ENCODE measurements at regions of chr6 and their contacts with region 1.

Region 1: DNA sequence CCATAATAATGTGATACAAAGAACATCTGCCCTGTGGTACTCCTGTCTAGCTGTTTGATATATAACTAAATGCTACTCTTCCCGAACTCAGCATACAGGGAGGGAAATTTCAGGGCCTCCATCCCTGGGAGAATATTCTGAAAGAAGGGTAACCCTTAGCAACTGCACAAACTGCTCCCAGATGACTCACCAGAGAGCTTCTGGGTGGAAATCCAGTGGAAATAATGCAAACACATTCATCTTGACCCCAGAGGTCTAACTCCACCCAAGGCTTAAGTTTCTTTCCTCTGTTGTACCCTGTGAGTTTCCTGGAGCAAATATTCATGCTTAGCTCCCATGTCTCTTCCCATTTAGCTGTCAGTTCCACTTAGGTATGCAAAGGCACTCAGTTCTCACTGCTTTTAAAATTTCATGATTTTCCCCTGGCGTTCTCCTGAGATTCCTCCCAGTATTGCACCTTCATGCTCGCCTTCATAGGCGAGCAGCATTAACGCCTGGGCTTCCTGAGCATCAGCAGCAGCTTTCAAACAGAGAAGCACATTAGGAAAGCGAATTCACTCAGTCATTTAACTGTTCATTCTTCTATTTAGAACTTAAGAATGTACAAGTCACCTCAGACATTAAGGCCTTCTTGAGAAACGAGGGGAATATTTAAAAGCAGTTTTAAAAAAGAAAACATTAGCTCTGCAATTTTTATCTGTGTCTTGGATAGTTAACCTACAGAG is 43.8 kb upstream of the LAMA4 start:
- DNase-seq: peak; percentile 48 to 98
- H3K4me3 ChIP-seq: peak overlapping the region; percentile 58
- H3K27ac ChIP-seq: peak overlapping the region; percentile 99
- H3K4me1 ChIP-seq: peaks cover 68% of the 10 kb centered on the region
- H3K27me3 ChIP-seq: no peaks in the 10 kb centered on the region
- CTCF ChIP-seq: peak; percentile 49

Region 2: DNA sequence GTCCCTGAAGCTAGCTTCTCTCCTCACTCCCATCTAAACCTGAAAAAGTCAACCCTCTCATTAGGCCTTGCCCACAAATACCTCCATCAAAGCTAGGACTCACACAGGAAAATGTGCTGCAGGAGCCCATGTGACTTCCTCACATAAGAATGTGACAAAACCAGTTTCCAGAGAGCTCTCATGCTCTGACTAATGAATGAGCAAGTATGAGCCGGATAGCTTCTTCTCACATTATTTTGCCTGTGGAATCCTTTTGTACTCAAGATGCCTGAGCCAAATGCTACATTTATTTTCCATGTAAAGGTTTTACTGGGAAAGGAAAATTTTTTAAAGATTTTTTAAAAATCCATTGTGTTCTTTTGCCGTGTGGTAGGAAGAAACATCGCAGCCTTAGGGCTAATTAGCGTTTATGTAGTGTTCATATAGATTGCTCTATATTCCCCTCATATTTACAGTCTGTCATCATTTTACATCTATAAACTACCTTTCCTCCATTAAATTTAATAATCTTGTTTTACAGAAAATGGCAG is 312.9 kb before region 1 on chr6:
- CTCF ChIA-PET with region 1: no interaction called
- POLR2A ChIA-PET with region 1: interaction called, 11 read pairs
- intact Hi-C with region 1: no loop called
- DNase-seq: peak; percentile 65 to 100
- H3K4me3 ChIP-seq: peak overlapping the region; percentile 24; the same call in 1 of the 2 replicates
- H3K27ac ChIP-seq: peak overlapping the region; percentile 85
- H3K4me1 ChIP-seq: peaks cover 52% of the 10 kb centered on the region
- H3K27me3 ChIP-seq: no peaks in the 10 kb centered on the region
- CTCF ChIP-seq: no peak

Region 3: GRCh38 chr6:112203577-112204349 is 94.4 kb before region 1 on chr6:
- CTCF ChIA-PET with region 1: no interaction called
- POLR2A ChIA-PET with region 1: interaction called, 8 read pairs
- intact Hi-C with region 1: loop called (anchors 1 kb)
- DNase-seq: peak; percentile 16 to 100
- H3K4me3 ChIP-seq: peak overlapping the region; percentile 34
- H3K27ac ChIP-seq: peak overlapping the region; percentile 98
- H3K4me1 ChIP-seq: peaks cover 75% of the 10 kb centered on the region
- H3K27me3 ChIP-seq: no peaks in the 10 kb centered on the region
- CTCF ChIP-seq: no peak

Region 4: DNA sequence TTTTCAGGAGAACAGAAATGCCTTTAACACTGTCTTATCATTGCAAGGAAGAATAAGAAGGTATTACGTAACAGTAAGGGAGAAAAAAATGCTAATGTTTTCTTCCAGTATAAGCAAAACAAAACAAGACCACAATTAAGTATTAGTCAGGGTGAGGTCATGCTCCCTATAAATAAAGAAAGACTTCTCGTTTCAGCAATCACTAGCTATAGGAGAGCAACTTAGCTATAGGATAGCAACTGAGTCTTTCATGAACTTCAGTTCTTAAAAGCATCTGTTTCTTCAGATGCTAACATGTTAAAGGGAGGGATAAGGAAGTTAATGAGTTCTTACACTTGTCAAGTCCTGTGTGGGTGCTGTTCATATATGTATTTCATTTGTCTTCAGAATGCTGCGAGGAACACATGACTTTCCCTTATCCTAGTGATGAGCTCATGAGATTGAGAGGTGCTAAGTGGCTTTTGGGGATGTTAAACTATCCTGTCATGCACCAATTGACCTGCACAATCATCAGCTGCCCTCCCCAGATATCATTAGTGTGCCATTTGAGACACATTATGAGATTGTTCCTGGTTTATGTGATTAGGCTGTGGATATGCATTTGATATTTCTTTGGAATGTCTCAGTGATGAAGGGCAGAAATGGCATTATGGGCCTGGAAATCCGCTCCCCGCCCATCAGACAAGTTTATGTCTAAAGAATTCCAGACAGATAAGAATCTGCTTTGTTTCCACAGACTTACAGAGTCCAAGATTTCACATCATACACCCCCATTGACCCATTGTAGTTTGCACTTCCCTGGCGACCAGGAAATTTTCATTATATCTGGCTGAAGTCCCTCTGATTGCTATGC is 81.3 kb before region 1 on chr6:
- CTCF ChIA-PET with region 1: no interaction called
- POLR2A ChIA-PET with region 1: interaction called, 6 read pairs
- intact Hi-C with region 1: loop called (anchors 1 kb)
- DNase-seq: peak; percentile 52 to 96
- H3K4me3 ChIP-seq: peak overlapping the region; percentile 1
- H3K27ac ChIP-seq: peak overlapping the region; percentile 79
- H3K4me1 ChIP-seq: peaks cover 69% of the 10 kb centered on the region
- H3K27me3 ChIP-seq: no peaks in the 10 kb centered on the region
- CTCF ChIP-seq: no peak

Region 5: GRCh38 chr6:112282221-112282620 is 16.0 kb before region 1 on chr6:
- CTCF ChIA-PET with region 1: interaction called, 3 read pairs
- POLR2A ChIA-PET with region 1: interaction called, 7 read pairs
- intact Hi-C with region 1: loop called (anchors 1 kb)
- DNase-seq: peak; percentile 39 to 87
- H3K4me3 ChIP-seq: no peak overlapping the region
- H3K27ac ChIP-seq: peak overlapping the region; percentile 57
- H3K4me1 ChIP-seq: peaks cover 44% of the 10 kb centered on the region
- H3K27me3 ChIP-seq: no peaks in the 10 kb centered on the region
- CTCF ChIP-seq: peak; percentile 47; the same call in 1 of the 2 replicates

Measured in PC-9 (cell line).